CD4-positive, alpha-beta memory T cell (primary cell): ENCODE measurements at regions of chr1 and their contacts with region 1.

Region 1: DNA sequence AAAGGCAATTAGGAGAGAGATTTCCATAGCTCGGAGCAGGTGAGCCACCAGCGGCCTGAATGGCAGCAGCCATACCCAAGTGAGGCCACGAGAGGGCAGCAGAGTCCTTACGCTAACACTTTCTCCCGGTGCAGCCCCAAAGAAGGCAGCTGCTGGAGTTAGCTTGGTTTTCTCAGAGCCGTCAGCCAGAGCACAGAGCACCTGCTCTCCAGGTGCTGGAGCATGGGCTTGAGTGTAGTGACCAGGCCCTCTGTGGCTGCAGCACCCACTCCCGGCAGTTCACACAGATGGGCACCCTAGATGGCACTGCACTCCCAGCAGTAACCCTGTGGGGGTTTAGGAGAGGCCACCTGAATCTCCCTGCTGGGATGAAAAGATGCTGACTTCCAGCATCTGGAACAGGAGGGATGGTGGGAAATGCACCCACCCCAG is 45.8 kb downstream of the TMCC2 start:
- DNase-seq: peak; percentile 80 to 84 (median 83)
- H3K4me3 ChIP-seq: peak overlapping the region in 1 of 2 donors; percentile 2
- H3K4me3 Mint-ChIP-seq: peak overlapping the region in 6 of 8 donors; percentile 34 to 72 (median 68)
- H3K27ac ChIP-seq: no peak overlapping the region
- H3K27ac Mint-ChIP-seq: peak overlapping the region in 5 of 7 donors; percentile 10 to 75 (median 55)
- H3K4me1 ChIP-seq: peaks cover 46% of the 10 kb centered on the region
- H3K4me1 Mint-ChIP-seq: peaks cover 21 to 46% (median 32%) of the 10 kb centered on the region in 4 donors
- H3K27me3 ChIP-seq: no peaks in the 10 kb centered on the region
- H3K27me3 Mint-ChIP-seq: no peaks in the 10 kb centered on the region

Region 2: DNA sequence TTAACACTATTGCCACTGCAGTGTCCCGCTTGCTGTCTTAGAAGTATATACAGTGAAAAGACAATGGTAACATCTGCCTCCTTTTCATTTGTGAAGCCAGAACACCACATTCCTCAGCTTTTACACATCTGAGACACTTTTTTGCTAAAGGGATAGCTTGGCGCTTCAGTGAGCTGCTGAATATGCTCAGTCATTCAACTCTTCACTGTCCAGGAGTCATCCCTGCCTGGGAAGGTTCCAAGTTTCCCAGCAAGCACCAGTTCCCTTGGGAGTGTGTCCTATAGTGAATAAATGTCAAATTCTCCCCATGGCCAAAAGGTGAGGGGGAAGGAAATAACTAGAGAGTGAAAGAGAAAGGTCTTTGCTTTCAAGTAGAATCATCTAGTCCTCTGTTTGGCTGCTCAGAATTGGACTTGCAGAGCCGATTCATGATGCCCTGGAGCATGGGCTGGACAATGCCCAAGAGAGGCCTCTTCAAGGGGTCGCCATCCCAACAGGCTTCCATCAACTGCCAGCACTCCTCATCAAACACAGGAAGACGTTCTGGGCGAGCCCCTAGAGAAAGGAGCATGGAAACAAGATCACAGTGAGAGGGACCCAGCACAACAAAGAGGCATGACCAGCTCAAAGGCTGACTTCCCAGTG is 126.3 kb before region 1 on chr1:
- CTCF ChIA-PET with region 1: no interaction called
- POLR2A ChIA-PET with region 1: no interaction called
- intact Hi-C with region 1: no loop called
- DNase-seq: no peak
- H3K4me3 ChIP-seq: no peak overlapping the region
- H3K4me3 Mint-ChIP-seq: no peak overlapping the region
- H3K27ac ChIP-seq: no peak overlapping the region
- H3K27ac Mint-ChIP-seq: peak overlapping the region in 2 of 7 donors; percentile 7 to 31
- H3K4me1 ChIP-seq: no peaks in the 10 kb centered on the region
- H3K4me1 Mint-ChIP-seq: peaks cover 0 to under 1% (median 0%) of the 10 kb centered on the region in 4 donors
- H3K27me3 ChIP-seq: no peaks in the 10 kb centered on the region
- H3K27me3 Mint-ChIP-seq: no peaks in the 10 kb centered on the region

Region 3: GRCh38 chr1:205284343-205285144 is 11.0 kb after region 1 on chr1:
- CTCF ChIA-PET with region 1: interaction called, 229 read pairs
- POLR2A ChIA-PET with region 1: interaction called, 279 read pairs
- intact Hi-C with region 1: loop called (anchors 1 kb)
- DNase-seq: peak; percentile 88 to 97 (median 90)
- H3K4me3 ChIP-seq: peak overlapping the region; percentile 56 to 71
- H3K4me3 Mint-ChIP-seq: peak overlapping the region; percentile 74 to 89 (median 84)
- H3K27ac ChIP-seq: peak overlapping the region; percentile 62
- H3K27ac Mint-ChIP-seq: peak overlapping the region; percentile 86 to 98 (median 95)
- H3K4me1 ChIP-seq: peaks cover 87% of the 10 kb centered on the region
- H3K4me1 Mint-ChIP-seq: peaks cover 64 to 89% (median 78%) of the 10 kb centered on the region in 4 donors
- H3K27me3 ChIP-seq: no peaks in the 10 kb centered on the region
- H3K27me3 Mint-ChIP-seq: no peaks in the 10 kb centered on the region

Region 4: GRCh38 chr1:205300886-205301821 is 27.6 kb after region 1 on chr1:
- CTCF ChIA-PET with region 1: interaction called, 79 read pairs
- POLR2A ChIA-PET with region 1: interaction called, 29 read pairs
- intact Hi-C with region 1: loop called (anchors 2 kb)
- DNase-seq: no peak
- H3K4me3 ChIP-seq: no peak overlapping the region
- H3K4me3 Mint-ChIP-seq: no peak overlapping the region
- H3K27ac ChIP-seq: no peak overlapping the region
- H3K27ac Mint-ChIP-seq: peak overlapping the region in 3 of 7 donors; percentile 9 to 35 (median 34)
- H3K4me1 ChIP-seq: peaks cover 29% of the 10 kb centered on the region
- H3K4me1 Mint-ChIP-seq: peaks cover 31 to 61% (median 44%) of the 10 kb centered on the region in 4 donors
- H3K27me3 ChIP-seq: no peaks in the 10 kb centered on the region
- H3K27me3 Mint-ChIP-seq: no peaks in the 10 kb centered on the region

Region 5: GRCh38 chr1:205321164-205321958 is 47.8 kb after region 1 on chr1 and contains the start of gene NUAK2:
- CTCF ChIA-PET with region 1: interaction called, 1,429 read pairs
- POLR2A ChIA-PET with region 1: interaction called, 1,030 read pairs
- intact Hi-C with region 1: loop called (anchors 1 kb)
- DNase-seq: peak; percentile 80 to 83 (median 81)
- H3K4me3 ChIP-seq: peak within 1 kb of the TSS; percentile 79 to 99
- H3K4me3 Mint-ChIP-seq: peak within 1 kb of the TSS; percentile 95 to 100 (median 98)
- H3K27ac ChIP-seq: peak within 1 kb of the TSS; percentile 74
- H3K27ac Mint-ChIP-seq: peak within 1 kb of the TSS; percentile 83 to 97 (median 90)
- H3K4me1 ChIP-seq: peaks cover 56% of the 10 kb centered on the region
- H3K4me1 Mint-ChIP-seq: peaks cover 49 to 80% (median 68%) of the 10 kb centered on the region in 4 donors
- H3K27me3 ChIP-seq: no peaks in the 10 kb centered on the region
- H3K27me3 Mint-ChIP-seq: no peaks in the 10 kb centered on the region
- total RNA-seq, gene NUAK2: 32.5 to 32.8 TPM

Region 6: DNA sequence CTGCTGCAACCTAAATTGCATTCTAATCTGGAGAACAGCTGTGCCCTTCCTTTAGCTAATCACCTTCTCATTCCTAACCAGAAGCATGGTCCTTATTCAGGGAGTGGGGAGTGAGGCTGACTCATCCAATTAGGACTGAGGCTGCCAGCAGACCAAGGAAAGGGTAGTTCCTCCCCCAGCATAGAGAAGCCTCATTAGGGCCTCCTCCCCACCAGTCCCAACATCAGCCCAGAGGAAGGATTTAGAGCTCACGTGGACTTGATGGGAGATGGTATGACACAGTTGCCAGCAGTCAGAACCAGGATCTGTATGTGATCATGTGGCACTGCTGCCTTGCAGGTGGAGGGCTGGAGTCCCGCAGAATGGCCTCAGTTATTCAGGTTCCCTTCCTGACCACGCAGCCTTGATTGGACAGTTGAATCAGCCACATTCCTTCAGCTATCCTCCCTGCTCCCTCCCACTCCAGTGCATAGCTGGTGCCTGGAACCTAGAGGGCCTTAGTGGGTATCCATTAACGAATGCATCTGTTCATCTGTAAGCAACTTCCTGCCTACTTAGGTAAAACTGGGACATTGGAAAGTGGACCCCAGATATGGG is 75.4 kb after region 1 on chr1:
- CTCF ChIA-PET with region 1: interaction called, 26 read pairs
- POLR2A ChIA-PET with region 1: interaction called, 8 read pairs
- intact Hi-C with region 1: loop called (anchors 1 kb)
- DNase-seq: no peak
- H3K4me3 ChIP-seq: no peak overlapping the region
- H3K4me3 Mint-ChIP-seq: no peak overlapping the region
- H3K27ac ChIP-seq: no peak overlapping the region
- H3K27ac Mint-ChIP-seq: no peak overlapping the region
- H3K4me1 ChIP-seq: peaks cover 7% of the 10 kb centered on the region
- H3K4me1 Mint-ChIP-seq: peaks cover 7 to 9% (median 8%) of the 10 kb centered on the region in 4 donors
- H3K27me3 ChIP-seq: peaks cover 14% of the 10 kb centered on the region
- H3K27me3 Mint-ChIP-seq: peaks cover 19 to 40% of the 10 kb centered on the region in 2 donors

Region 7: GRCh38 chr1:205523891-205524793 is 250.6 kb after region 1 on chr1:
- CTCF ChIA-PET with region 1: interaction called, 23 read pairs
- POLR2A ChIA-PET with region 1: no interaction called
- intact Hi-C with region 1: no loop called
- DNase-seq: peak in 4 of 5 donors; percentile 61 to 64 (median 63)
- H3K4me3 ChIP-seq: no peak overlapping the region
- H3K4me3 Mint-ChIP-seq: no peak overlapping the region
- H3K27ac ChIP-seq: no peak overlapping the region
- H3K27ac Mint-ChIP-seq: no peak overlapping the region
- H3K4me1 ChIP-seq: no peaks in the 10 kb centered on the region
- H3K4me1 Mint-ChIP-seq: no peaks in the 10 kb centered on the region
- H3K27me3 ChIP-seq: no peaks in the 10 kb centered on the region
- H3K27me3 Mint-ChIP-seq: peaks cover 0 to 3% of the 10 kb centered on the region in 2 donors